AG04449 (cell line): ENCODE measurements at regions of chr1 and their contacts with region 1.

Region 1: DNA sequence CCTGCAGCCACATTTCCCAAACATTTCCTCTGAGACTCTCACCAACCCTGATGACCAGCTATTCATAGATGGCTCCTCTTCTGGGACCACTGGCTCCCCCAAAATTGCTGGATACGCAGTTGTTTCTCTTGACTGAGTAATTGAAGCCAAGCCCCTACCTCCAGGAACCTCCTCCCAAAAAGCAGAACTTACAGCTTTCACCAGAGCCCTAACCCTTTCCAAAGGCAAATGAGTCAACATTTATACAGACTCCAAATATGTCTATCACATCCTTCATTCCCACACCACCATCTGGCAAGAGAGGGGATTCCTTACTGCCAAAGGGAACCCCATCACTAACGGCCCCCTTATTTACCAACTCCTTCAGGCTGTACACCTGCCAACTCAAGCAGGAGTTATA is 20.3 kb upstream of the CA6 start:
- DNase-seq: no peak
- H3K4me3 ChIP-seq: no peak overlapping the region
- CTCF ChIP-seq: no peak

Region 2: GRCh38 chr1:8439015-8439702 is 486.2 kb before region 1 on chr1:
- CTCF ChIA-PET with region 1: no interaction called
- POLR2A ChIA-PET with region 1: no interaction called
- DNase-seq: no peak
- H3K4me3 ChIP-seq: no peak overlapping the region
- CTCF ChIP-seq: no peak

Region 3: DNA sequence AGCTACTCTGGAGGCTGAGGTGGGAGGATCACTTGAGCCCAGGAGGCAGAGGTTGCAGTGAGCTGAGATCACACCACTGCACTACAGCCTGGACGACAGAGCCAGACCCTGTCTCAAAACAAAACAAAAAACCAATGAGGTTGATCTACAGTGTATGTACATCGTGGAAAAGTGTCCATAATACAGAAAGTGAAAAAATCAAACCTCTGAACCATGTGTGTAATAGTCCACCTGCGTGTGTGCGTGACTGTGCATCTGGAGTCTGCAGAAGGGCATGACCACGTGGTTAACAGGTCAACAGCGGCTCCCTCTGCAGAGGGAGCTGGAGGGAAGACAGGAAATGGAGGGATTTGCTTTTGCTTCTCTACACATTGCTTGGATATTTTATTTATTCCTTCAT is 14.5 kb before region 1 on chr1:
- CTCF ChIA-PET with region 1: interaction called, 44 read pairs
- POLR2A ChIA-PET with region 1: no interaction called
- DNase-seq: no peak
- H3K4me3 ChIP-seq: no peak overlapping the region
- CTCF ChIP-seq: no peak

Region 4: DNA sequence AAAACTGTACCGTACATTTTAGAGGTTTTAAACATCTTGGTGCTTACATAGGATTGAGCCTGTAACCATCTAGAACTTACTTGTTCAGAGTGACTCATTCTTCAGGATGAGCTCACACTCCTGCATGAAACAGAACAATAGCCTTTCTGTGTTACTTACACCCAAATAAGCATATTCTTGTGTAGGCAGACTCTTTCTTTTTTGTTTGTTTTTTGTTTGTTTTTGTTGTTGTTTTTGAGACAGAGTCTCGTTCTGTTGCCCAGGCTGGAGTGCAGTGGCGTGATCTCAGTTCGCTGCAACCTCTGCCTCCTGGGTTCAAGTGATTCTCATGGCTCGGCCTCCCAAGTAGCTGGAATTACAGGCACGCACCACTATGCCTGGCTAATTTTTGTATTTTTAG is 16.5 kb after region 1 on chr1:
- CTCF ChIA-PET with region 1: interaction called, 34 read pairs
- POLR2A ChIA-PET with region 1: no interaction called
- DNase-seq: peak; percentile 37
- H3K4me3 ChIP-seq: no peak overlapping the region
- CTCF ChIP-seq: no peak